Vagina (tissue), 2 donors: ENCODE measurements at regions of chr6 and their contacts with region 1.

Region 1: GRCh38 chr6:152552616-152553209 is 84.4 kb downstream of the SYNE1 start:
- DNase-seq: no peak
- H3K4me3 ChIP-seq: no peak overlapping the region
- H3K27ac ChIP-seq: no peak overlapping the region
- H3K4me1 ChIP-seq: no peaks in the 10 kb centered on the region
- H3K27me3 ChIP-seq: no peaks in the 10 kb centered on the region
- CTCF ChIP-seq: peak; percentile 67 to 90 (median 87)
- POLR2A ChIP-seq: no peak

Region 2: DNA sequence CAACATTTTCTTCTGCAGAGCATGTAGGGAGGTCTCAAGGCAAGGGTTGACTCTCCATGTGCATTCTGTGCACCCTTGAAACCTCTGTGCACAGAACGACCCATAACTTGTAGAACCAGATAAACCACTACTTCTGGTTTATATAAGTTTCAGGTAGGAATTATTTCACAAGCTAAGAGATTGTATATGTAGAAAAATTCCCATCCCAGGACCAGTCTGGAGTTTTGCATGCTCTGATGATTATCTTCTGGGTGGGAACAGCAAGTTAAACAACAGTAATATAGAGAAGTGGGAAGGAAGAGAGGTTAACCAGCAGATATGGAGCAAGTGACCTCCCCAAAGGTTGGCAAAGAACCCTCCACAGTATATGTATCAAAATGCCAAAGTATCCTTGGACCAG is 20.1 kb before region 1 on chr6:
- intact Hi-C with region 1: no loop called
- DNase-seq: no peak
- H3K4me3 ChIP-seq: no peak overlapping the region
- H3K27ac ChIP-seq: no peak overlapping the region
- H3K4me1 ChIP-seq: no peaks in the 10 kb centered on the region
- H3K27me3 ChIP-seq: no peaks in the 10 kb centered on the region
- CTCF ChIP-seq: no peak
- POLR2A ChIP-seq: no peak

Region 3: GRCh38 chr6:152669895-152670294 is 117.2 kb after region 1 on chr6:
- intact Hi-C with region 1: loop called (anchors 5 kb)
- DNase-seq: no peak
- H3K4me3 ChIP-seq: no peak overlapping the region
- H3K27ac ChIP-seq: no peak overlapping the region
- H3K4me1 ChIP-seq: no peaks in the 10 kb centered on the region
- H3K27me3 ChIP-seq: no peaks in the 10 kb centered on the region
- CTCF ChIP-seq: peak; percentile 9 to 41 (median 32)
- POLR2A ChIP-seq: no peak